ENCODE measurements at regions of chr15 and their contacts with region 1.

Region 1: GRCh38 chr15:63093486-63094205 is 28.0 kb upstream of the LACTB start:
- DNase-seq: peak; percentile 79 to 91
- ATAC-seq: peak; percentile 91

Region 2: DNA sequence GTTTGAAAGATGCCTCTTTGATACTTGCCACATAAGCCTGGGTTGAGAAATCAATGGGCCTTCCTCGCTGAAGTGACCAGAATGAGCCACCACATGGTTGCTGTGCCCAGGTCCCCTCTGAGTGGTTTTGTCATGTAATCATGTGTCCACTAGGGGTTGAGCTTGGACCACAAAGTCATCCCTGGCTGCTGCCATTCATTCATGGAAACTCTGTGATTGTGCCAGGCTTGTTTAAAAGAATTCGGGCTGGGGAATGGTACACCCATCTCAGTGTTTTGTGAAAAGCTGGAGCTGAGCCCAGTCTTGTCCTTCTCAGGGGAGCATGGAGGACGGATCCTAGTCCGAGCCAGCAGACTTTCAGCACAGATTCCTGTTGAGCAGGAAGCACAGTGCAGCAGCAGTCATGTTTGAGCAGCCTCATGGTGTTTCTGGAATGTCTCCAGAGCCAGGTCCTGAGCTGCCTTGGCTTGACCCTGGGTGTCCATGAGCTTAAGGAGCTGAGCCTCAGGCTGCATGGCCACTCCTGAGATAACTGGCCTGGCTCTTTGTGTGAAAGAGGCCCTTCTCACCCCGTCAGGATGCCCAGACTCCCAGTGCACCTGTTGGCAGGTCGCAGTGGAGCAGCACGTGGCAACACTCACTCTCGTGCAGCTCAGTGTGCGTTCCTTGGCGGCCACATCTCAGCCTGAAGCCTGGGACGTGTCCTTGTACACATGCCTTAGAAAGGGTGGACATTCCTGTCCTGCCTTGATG is 311.4 kb before region 1 on chr15:
- intact Hi-C with region 1: loop called in 1 of 2 experiments (anchors 5 kb)
- DNase-seq: peak; percentile 37 to 69
- ATAC-seq: peak; percentile 95

Region 3: GRCh38 chr15:62847900-62848489 is 245.7 kb before region 1 on chr15:
- intact Hi-C with region 1: loop called in 1 of 2 experiments (anchors 5 kb)
- DNase-seq: peak; percentile 74 to 87
- ATAC-seq: peak; percentile 73

Region 4: GRCh38 chr15:62886431-62887071 is 207.1 kb before region 1 on chr15:
- intact Hi-C with region 1: no loop called
- DNase-seq: no peak
- ATAC-seq: peak; percentile 23

Region 5: GRCh38 chr15:63048115-63048775 is 45.4 kb before region 1 on chr15:
- intact Hi-C with region 1: loop called in 1 of 2 experiments (anchors 5 kb)
- DNase-seq: peak; percentile 93 to 95
- ATAC-seq: peak; percentile 62

Region 6: DNA sequence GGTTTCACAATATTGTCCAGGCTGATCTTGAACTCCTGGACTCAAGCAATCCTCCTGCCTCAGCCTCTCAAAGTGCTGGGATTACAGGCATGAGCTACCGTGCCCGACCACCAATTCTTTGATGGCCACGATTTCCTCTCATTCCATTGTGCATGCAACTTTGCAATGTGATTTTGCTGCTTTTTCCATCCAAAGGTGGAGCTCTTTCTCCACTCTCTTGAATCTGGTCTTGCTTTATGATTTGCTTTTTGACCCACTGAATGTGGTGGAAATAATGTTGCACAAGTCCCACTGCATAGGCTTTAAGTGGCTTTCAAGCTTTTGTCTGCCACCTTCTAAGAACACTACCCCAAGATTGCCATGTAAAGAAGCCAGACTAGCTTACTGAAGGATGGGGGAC is 53.0 kb after region 1 on chr15:
- intact Hi-C with region 1: no loop called
- DNase-seq: no peak
- ATAC-seq: peak; percentile 23

Measured in left colon (tissue), 2 donors.